CD4-positive, alpha-beta memory T cell (primary cell): ENCODE measurements at regions of chr3 and their contacts with region 1.

Region 1: GRCh38 chr3:187714404-187714979 is 12.1 kb upstream of the RTP2 start:
- DNase-seq: peak; percentile 65 to 75 (median 70)
- H3K4me3 ChIP-seq: no peak overlapping the region
- H3K4me3 Mint-ChIP-seq: peak overlapping the region in 2 of 8 donors; percentile 63 to 65
- H3K27ac ChIP-seq: no peak overlapping the region
- H3K27ac Mint-ChIP-seq: peak overlapping the region in 6 of 7 donors; percentile 13 to 61 (median 19)
- H3K4me1 ChIP-seq: peaks cover 15% of the 10 kb centered on the region
- H3K4me1 Mint-ChIP-seq: peaks cover 13 to 18% (median 17%) of the 10 kb centered on the region in 4 donors
- H3K27me3 ChIP-seq: no peaks in the 10 kb centered on the region
- H3K27me3 Mint-ChIP-seq: no peaks in the 10 kb centered on the region

Region 2: GRCh38 chr3:187616307-187616972 is 98.1 kb before region 1 on chr3:
- CTCF ChIA-PET with region 1: interaction called, 19 read pairs
- POLR2A ChIA-PET with region 1: no interaction called
- intact Hi-C with region 1: no loop called
- DNase-seq: peak; percentile 21 to 38 (median 36)
- H3K4me3 ChIP-seq: no peak overlapping the region
- H3K4me3 Mint-ChIP-seq: no peak overlapping the region
- H3K27ac ChIP-seq: no peak overlapping the region
- H3K27ac Mint-ChIP-seq: no peak overlapping the region
- H3K4me1 ChIP-seq: no peaks in the 10 kb centered on the region
- H3K4me1 Mint-ChIP-seq: peaks cover 0 to 4% (median under 1%) of the 10 kb centered on the region in 4 donors
- H3K27me3 ChIP-seq: no peaks in the 10 kb centered on the region
- H3K27me3 Mint-ChIP-seq: peaks cover 5 to 11% of the 10 kb centered on the region in 2 donors